Activated CD8-positive, alpha-beta memory T cell treated with anti-CD3 and anti-CD28 coated beads, Interleukin-2, amount 10 ng/mL, durations not matched to agents 7 days and 5 days (primary cell): ENCODE measurements at regions of chr1 and their contacts with region 1.

Region 1: DNA sequence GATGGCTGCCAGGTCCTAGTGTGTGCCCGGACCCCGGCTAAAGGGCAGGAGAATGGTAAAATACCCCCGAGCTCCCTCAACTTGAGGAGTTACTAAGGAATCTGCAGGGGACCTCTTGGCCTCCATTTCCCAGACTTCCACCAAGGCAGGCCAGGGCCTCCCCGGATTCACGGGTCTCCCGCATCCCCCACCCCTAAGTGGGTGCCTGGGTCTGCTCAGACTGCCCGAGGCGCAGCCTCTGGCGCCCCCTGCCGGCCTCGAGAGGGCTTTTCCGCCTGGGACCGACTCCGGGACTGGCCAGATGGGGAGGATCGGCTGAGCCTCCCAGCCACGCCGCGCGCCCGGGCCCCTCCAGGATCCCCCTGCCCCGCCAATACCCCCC is 1.7 kb downstream of the PLEKHG5 start:
- DNase-seq: peak; percentile 84
- ATAC-seq: peak; percentile 80
- H3K4me3 Mint-ChIP-seq: peak overlapping the region; percentile 73
- H3K27ac Mint-ChIP-seq: peak overlapping the region; percentile 78
- H3K4me1 Mint-ChIP-seq: peaks cover 9% of the 10 kb centered on the region
- H3K27me3 Mint-ChIP-seq: peaks cover 27% of the 10 kb centered on the region

Region 2: GRCh38 chr1:6199298-6200187 is 290.2 kb before region 1 on chr1 and contains the start of gene RPL22:
- CTCF ChIA-PET with region 1: no interaction called
- DNase-seq: peak; percentile 99
- ATAC-seq: peak; percentile 97
- H3K4me3 Mint-ChIP-seq: peak within 1 kb of the TSS; percentile 90
- H3K27ac Mint-ChIP-seq: peak within 1 kb of the TSS; percentile 80
- H3K4me1 Mint-ChIP-seq: peaks cover 38% of the 10 kb centered on the region
- H3K27me3 Mint-ChIP-seq: no peaks in the 10 kb centered on the region
- total RNA-seq, gene RPL22: 229 to 287 TPM

Region 3: DNA sequence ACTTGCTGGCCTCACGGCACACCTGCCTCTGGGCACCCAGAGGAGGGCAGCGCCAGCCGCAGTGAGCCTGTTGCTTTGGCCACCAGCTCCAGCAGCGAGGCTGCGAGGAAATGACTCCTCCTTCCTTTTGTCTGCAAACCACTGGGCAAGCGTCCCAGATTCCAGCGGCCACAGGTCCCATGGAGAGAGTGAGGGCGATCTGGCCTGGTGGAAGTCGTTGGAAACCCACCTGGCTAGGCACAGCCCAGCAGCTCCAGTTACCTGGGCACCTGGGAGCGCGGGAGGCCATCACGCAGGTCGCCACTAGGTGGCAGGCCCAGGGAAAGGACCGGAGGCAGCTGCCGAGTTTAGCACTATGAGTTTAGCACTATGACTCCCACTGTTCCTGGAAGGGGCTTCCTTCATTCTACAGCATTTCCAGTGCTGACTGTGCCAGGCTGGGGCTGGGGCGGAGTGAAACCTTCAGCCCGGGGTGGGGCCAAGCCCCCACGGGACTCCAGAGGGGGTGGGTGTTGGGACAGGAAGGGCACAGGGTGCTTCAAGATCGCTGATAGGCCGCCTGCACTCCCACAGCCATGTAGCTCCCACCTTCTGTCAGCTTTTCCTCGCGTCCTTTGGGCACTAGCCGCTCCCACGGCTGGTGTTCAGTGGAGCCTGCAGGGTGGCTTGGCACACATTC is 66.3 kb before region 1 on chr1:
- CTCF ChIA-PET with region 1: interaction called, 19 read pairs
- DNase-seq: peak; percentile 73
- ATAC-seq: peak; percentile 70
- H3K4me3 Mint-ChIP-seq: no peak overlapping the region
- H3K27ac Mint-ChIP-seq: no peak overlapping the region
- H3K4me1 Mint-ChIP-seq: peaks cover 17% of the 10 kb centered on the region
- H3K27me3 Mint-ChIP-seq: peaks cover 68% of the 10 kb centered on the region

Region 4: DNA sequence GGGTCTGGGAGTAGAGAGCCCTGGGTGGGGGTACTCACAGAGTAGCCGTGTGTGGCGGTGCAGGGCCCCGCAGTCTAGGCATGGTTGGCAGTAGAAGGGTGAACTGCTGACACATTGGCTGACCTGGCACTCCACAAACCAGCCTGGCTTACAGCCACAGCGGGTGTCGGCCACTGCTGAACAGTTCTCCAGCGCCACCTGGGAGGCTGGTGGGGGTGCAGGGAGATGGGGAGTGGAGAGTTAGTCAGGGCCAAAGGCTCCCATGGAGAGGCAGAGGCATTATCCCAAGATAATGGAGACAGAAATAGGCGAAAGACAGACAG is 25.3 kb before region 1 on chr1:
- CTCF ChIA-PET with region 1: interaction called, 16 read pairs
- DNase-seq: no peak
- ATAC-seq: no peak
- H3K4me3 Mint-ChIP-seq: peak overlapping the region; percentile 79
- H3K27ac Mint-ChIP-seq: peak overlapping the region; percentile 78
- H3K4me1 Mint-ChIP-seq: peaks cover 40% of the 10 kb centered on the region
- H3K27me3 Mint-ChIP-seq: no peaks in the 10 kb centered on the region

Region 5: GRCh38 chr1:6519935-6520671 is 30.3 kb after region 1 on chr1:
- CTCF ChIA-PET with region 1: interaction called, 12 read pairs
- DNase-seq: no peak
- ATAC-seq: no peak
- H3K4me3 Mint-ChIP-seq: no peak overlapping the region
- H3K27ac Mint-ChIP-seq: no peak overlapping the region
- H3K4me1 Mint-ChIP-seq: peaks cover 4% of the 10 kb centered on the region
- H3K27me3 Mint-ChIP-seq: no peaks in the 10 kb centered on the region

Region 6: GRCh38 chr1:6646499-6647148 is 156.8 kb after region 1 on chr1:
- CTCF ChIA-PET with region 1: interaction called, 29 read pairs
- DNase-seq: no peak
- ATAC-seq: peak; percentile 64
- H3K4me3 Mint-ChIP-seq: no peak overlapping the region
- H3K27ac Mint-ChIP-seq: no peak overlapping the region
- H3K4me1 Mint-ChIP-seq: no peaks in the 10 kb centered on the region
- H3K27me3 Mint-ChIP-seq: no peaks in the 10 kb centered on the region